IMR-90 (cell line): ENCODE measurements at regions of chr4 and their contacts with region 1.

Region 1: GRCh38 chr4:124105212-124105611 is 607.3 kb downstream of the ANKRD50 start:
- DNase-seq: peak; percentile 22
- ATAC-seq: 0 out of 2 replicates have a peak, but pooled peaks have one; percentile 21
- H3K4me3 ChIP-seq: no peak overlapping the region
- H3K27ac ChIP-seq: no peak overlapping the region
- H3K4me1 ChIP-seq: no peaks in the 10 kb centered on the region
- H3K27me3 ChIP-seq: no peaks in the 10 kb centered on the region
- CTCF ChIP-seq: no peak
- POLR2A ChIP-seq: no peak
- RAD21 ChIP-seq: no peak

Region 2: DNA sequence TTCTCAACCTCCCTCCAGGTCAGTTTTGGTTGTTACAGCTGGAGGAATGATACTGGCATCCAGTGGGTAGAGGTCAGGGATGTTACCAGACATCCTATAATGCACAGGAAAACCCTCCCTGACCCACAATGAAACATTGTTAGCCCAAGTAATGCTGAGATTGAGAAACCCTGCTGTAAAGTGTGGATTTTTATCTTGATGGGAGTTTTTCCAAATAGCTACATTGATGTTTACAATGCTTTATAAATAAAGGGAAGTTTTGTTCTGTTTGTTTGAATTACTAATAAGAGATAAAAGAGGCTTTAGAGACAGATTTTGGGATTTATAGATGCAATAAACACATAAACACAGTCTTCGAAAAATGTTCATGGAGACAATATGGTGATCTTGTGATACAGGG is 988.8 kb before region 1 on chr4:
- CTCF ChIA-PET with region 1: no interaction called
- POLR2A ChIA-PET with region 1: no interaction called
- dilution Hi-C with region 1: no loop called
- in situ Hi-C with region 1: loop called (anchors 10 kb)
- intact Hi-C with region 1: no loop called
- DNase-seq: peak; percentile 47
- ATAC-seq: peak; percentile 30
- H3K4me3 ChIP-seq: no peak overlapping the region
- H3K27ac ChIP-seq: no peak overlapping the region
- H3K4me1 ChIP-seq: peaks cover 7% of the 10 kb centered on the region
- H3K27me3 ChIP-seq: no peaks in the 10 kb centered on the region
- CTCF ChIP-seq: no peak
- POLR2A ChIP-seq: no peak
- RAD21 ChIP-seq: no peak

Region 3: DNA sequence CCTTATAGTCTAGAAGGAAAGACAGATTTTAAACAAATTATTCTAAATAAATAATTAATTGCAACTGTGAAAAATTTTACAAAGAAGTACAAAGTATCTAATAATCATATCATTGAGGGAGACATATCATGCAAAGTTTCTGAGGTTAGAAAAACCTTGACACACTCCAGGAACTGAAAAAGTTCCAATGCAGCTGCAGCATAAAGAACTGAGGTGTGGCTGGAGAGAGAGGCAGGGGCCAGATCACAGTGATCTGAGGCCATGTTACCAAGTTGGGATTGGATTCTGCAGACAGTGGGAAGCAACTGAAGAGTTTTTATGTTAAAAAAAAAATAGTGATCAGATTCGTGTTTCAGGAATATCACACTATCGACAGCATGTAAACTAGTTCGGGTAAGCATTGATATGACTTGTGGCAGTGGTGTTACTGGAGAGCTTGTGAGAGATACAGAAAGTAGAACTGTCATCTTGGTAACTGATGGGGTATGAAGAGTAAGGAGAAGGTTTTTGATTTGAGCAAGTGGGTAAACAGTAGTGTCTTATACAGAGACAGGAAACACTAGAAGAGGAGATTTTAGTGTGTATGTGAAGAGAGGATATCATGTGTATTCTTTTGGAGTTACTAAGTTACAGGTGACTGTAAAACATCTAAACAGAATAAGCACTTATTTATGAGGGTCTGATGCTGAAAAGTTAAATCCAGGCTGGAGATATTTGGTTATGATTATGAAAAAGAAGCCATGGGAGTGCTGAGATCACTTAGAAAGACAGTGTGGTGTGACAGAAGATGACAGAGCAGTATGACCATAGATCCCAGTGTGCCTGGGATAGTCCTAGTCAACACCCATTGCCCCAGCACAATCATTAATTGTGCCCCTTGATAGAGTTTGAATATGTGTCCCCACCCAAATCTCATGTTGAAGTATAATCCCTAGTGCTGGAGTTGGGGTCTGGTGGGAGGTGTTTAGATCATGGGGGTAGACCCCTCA is 724.2 kb before region 1 on chr4:
- CTCF ChIA-PET with region 1: no interaction called
- POLR2A ChIA-PET with region 1: no interaction called
- dilution Hi-C with region 1: no loop called
- in situ Hi-C with region 1: loop called (anchors 10 kb)
- intact Hi-C with region 1: no loop called
- DNase-seq: no peak
- ATAC-seq: no peak
- H3K4me3 ChIP-seq: no peak overlapping the region
- H3K27ac ChIP-seq: no peak overlapping the region
- H3K4me1 ChIP-seq: peaks cover 2% of the 10 kb centered on the region; the same call in 1 of the 2 replicates
- H3K27me3 ChIP-seq: no peaks in the 10 kb centered on the region
- CTCF ChIP-seq: no peak
- POLR2A ChIP-seq: no peak
- RAD21 ChIP-seq: no peak

Region 4: DNA sequence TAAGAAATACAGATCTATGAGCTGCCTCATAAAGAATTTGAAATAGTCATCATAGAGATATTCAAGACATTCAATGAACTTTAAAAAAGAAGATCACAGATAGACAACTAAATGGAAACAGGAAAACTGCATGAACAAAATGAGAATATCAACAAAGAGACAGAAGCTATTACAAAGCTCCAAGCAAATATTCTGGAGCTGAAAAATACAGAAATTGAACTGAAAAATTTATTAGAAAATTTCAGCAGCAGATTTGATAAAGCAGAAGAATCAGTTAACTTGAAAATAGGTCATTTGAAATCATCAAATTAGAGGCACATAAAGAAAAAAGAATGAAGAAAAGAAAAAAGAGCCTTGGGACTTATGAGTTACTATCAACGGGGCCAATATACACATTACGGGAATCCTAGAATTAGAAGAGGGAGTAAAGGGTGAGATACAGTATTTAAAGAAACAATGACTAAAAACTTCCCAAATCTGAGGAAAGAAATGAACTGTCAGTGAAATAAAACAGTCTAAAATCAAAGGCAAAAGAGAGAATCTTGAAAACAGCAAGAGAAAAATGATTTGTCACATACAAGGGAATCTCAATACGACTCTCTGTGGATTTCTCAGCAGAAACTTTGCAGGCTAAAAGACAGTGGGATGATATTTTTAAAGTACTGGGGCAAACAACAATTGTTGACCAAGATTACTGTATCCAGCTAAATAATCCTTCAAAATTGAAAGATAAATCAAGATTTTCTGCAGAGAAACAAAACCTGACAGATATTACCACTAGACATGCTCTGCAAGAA is 34.3 kb before region 1 on chr4:
- CTCF ChIA-PET with region 1: no interaction called
- POLR2A ChIA-PET with region 1: no interaction called
- dilution Hi-C with region 1: no loop called
- in situ Hi-C with region 1: no loop called
- intact Hi-C with region 1: no loop called
- DNase-seq: peak; percentile 19
- ATAC-seq: no peak
- H3K4me3 ChIP-seq: no peak overlapping the region
- H3K27ac ChIP-seq: no peak overlapping the region
- H3K4me1 ChIP-seq: no peaks in the 10 kb centered on the region
- H3K27me3 ChIP-seq: no peaks in the 10 kb centered on the region
- CTCF ChIP-seq: no peak
- POLR2A ChIP-seq: no peak
- RAD21 ChIP-seq: no peak